ENCODE measurements at regions of chr1 and their contacts with region 1.

Region 1: DNA sequence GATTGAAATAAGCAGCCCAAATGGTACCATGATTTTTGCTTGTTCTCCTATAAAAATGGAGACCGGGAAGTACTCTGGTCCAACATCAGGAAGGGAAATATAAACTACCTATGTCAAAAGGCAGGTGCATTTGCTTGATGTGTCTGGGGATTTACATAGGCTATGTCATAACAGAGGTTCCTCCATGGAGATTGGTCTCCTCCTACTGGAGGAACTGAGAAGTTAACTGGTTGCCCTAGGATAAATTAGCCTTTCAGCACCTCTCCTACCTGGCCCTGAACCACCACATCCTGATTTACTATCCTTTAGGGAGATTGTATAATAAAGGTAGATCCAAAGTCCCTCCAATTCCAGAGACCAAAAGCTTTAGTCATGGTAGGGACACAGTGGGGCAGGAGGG is 1109.3 kb upstream of the B3GALT2 start:
- DNase-seq: peak; percentile 51
- H3K4me3 Mint-ChIP-seq: no peak overlapping the region
- H3K27ac Mint-ChIP-seq: no peak overlapping the region
- H3K4me1 Mint-ChIP-seq: peaks cover 10% of the 10 kb centered on the region
- H3K27me3 Mint-ChIP-seq: no peaks in the 10 kb centered on the region
- CTCF ChIP-seq: peak; percentile 69

Region 2: GRCh38 chr1:193143285-193143684 is 1152.4 kb before region 1 on chr1:
- CTCF ChIA-PET with region 1: no interaction called
- intact Hi-C with region 1: loop called (anchors 2 kb)
- DNase-seq: no peak
- H3K4me3 Mint-ChIP-seq: no peak overlapping the region
- H3K27ac Mint-ChIP-seq: no peak overlapping the region
- H3K4me1 Mint-ChIP-seq: no peaks in the 10 kb centered on the region
- H3K27me3 Mint-ChIP-seq: no peaks in the 10 kb centered on the region
- CTCF ChIP-seq: no peak

Region 3: DNA sequence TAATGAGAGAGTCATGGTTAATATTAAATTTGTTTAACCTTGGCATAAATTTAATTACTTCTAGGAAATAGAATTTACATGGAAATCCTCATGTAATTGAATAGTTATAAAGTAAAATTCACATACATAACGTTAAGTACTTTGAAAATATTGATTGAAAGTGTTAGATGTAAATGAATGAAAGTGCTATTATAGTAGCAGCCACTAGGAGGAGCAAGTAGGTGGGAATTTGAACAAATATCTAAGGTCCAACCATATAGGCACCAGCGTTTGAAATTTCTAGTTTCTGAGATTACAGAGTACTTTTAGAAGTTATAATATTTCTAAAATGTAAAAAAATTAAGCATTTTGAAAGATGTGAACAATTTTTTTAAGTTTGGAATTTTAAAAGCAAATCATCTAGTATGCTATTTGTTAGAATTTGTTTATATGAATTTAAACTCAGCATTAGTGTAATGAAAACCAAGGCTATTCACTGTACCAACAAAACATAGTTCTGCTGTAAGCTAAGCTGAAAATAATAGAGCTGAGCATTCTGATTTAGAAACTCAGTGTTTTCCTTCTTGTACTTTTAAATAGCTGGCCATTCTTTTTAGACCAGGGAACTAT is 1112.6 kb before region 1 on chr1:
- CTCF ChIA-PET with region 1: no interaction called
- intact Hi-C with region 1: loop called (anchors 1 kb)
- DNase-seq: peak; percentile 39
- H3K4me3 Mint-ChIP-seq: no peak overlapping the region
- H3K27ac Mint-ChIP-seq: no peak overlapping the region
- H3K4me1 Mint-ChIP-seq: peaks cover 28% of the 10 kb centered on the region
- H3K27me3 Mint-ChIP-seq: no peaks in the 10 kb centered on the region
- CTCF ChIP-seq: peak; percentile 65

Region 4: GRCh38 chr1:193785850-193786420 is 509.8 kb before region 1 on chr1:
- CTCF ChIA-PET with region 1: no interaction called
- intact Hi-C with region 1: loop called (anchors 10 kb)
- DNase-seq: no peak
- H3K4me3 Mint-ChIP-seq: no peak overlapping the region
- H3K27ac Mint-ChIP-seq: no peak overlapping the region
- H3K4me1 Mint-ChIP-seq: peaks cover 18% of the 10 kb centered on the region
- H3K27me3 Mint-ChIP-seq: no peaks in the 10 kb centered on the region
- CTCF ChIP-seq: no peak

Region 5: DNA sequence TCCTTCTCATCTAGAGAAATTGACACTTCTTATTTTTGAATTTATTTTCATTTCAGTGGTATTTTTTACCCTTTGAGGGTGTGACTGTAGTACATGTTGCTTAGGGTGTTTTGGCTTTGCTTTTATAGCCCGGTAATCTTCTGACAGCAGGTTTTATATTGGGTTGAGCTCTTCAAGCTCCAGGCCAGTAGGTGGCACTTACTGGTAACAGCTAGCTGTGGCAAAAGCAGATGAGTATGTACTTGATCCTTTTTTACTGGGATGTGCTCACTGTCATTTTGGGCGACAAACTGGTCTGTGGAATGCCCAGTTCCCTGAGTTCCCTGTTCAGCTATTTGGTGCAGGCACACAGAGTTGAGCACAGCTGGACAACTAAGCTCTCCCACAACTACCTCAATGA is 193.1 kb before region 1 on chr1:
- CTCF ChIA-PET with region 1: no interaction called
- intact Hi-C with region 1: loop called (anchors 5 kb)
- DNase-seq: no peak
- H3K4me3 Mint-ChIP-seq: no peak overlapping the region
- H3K27ac Mint-ChIP-seq: no peak overlapping the region
- H3K4me1 Mint-ChIP-seq: no peaks in the 10 kb centered on the region
- H3K27me3 Mint-ChIP-seq: no peaks in the 10 kb centered on the region
- CTCF ChIP-seq: peak; percentile 7

Region 6: GRCh38 chr1:194159940-194160339 is 135.7 kb before region 1 on chr1:
- CTCF ChIA-PET with region 1: no interaction called
- intact Hi-C with region 1: loop called (anchors 1 kb)
- DNase-seq: no peak
- H3K4me3 Mint-ChIP-seq: no peak overlapping the region
- H3K27ac Mint-ChIP-seq: no peak overlapping the region
- H3K4me1 Mint-ChIP-seq: no peaks in the 10 kb centered on the region
- H3K27me3 Mint-ChIP-seq: no peaks in the 10 kb centered on the region
- CTCF ChIP-seq: no peak

Region 7: DNA sequence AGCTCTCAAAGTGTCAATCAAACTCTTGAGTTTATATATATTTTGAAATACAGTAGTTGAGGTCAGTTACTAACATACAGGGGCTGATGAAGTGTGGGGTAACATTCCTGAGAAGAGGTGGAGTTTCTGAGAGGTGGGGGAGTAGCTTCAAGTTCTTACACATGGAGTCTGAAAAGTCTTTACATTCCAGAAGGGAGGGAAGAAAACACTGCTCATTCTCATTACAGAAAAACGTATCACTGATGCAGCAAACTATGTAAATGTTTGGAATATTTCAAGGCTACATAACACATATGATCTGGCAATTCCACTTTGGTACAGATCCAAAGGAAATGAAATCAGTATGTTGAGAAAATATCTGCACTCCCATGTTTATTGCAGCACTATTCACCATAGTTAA is 43.5 kb before region 1 on chr1:
- CTCF ChIA-PET with region 1: no interaction called
- intact Hi-C with region 1: no loop called
- DNase-seq: no peak
- H3K4me3 Mint-ChIP-seq: no peak overlapping the region
- H3K27ac Mint-ChIP-seq: no peak overlapping the region
- H3K4me1 Mint-ChIP-seq: peaks cover 13% of the 10 kb centered on the region
- H3K27me3 Mint-ChIP-seq: no peaks in the 10 kb centered on the region
- CTCF ChIP-seq: no peak